ENCODE measurements at regions of chr20 and their contacts with region 1.

Region 1: GRCh38 chr20:46151936-46152335 is 33.8 kb downstream of the CD40 start:
- DNase-seq: peak; percentile 39
- H3K27ac ChIP-seq: no peak overlapping the region
- CTCF ChIP-seq: peak; percentile 60

Region 2: GRCh38 chr20:45910670-45911485 is 241.1 kb before region 1 on chr20:
- CTCF ChIA-PET with region 1: no interaction called
- POLR2A ChIA-PET with region 1: no interaction called
- DNase-seq: peak; percentile 99
- H3K27ac ChIP-seq: peak overlapping the region; percentile 79
- CTCF ChIP-seq: no peak

Region 3: DNA sequence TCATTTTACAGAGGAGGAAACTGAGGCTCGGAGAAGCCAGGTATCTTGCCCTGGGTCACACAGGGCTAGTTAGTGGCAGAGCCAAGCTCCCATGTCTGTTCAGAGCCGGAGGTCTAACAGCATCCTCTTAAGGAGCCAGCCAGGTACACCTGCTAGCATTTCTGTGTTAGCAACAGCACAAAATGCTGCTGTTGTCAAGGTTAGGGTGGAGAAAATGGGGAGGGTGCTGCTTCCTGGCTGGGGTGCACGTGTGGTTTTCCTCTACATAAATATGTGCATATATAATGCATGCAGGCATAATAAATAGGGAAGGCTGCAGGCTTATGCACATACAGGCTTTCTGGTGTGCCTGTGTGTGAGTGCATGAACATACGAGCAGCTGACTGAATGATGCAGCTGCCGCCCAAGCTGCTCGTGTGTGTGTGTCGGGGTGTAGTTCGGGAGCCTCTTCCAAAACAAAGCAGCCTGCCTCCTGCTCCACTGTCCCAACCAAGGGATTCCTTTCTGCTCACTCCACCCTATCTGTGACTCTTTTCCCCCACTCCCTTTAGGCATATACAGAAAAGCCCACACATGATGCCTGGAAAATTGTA is 52.8 kb after region 1 on chr20:
- CTCF ChIA-PET with region 1: interaction called, 10 read pairs
- POLR2A ChIA-PET with region 1: no interaction called
- DNase-seq: no peak
- H3K27ac ChIP-seq: no peak overlapping the region
- CTCF ChIP-seq: no peak

Measured in RWPE1 (cell line).